ENCODE measurements at regions of chr12 and their contacts with region 1.

Region 1: DNA sequence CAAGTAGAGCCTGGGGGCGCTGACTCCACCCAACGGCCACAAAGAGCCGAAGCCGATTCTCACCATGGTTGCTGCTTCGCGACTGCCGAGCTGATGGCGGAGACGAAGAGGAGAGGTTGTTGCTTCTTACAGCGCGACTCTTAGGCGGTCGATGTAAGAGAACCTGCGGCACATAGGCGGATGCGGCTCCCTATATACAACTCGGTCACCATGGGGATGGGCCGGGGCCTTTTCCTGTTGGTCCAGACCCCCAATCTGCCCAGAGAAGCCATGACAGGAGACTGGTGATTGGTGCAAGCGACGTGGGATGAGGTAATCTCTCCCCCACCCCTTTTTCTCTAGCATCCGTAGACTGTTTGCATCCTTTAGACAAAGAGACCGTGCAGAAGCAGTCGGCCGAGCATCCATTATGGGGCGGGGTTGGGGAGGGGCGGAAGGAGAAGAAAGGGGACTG is at the start of gene TUBA1A:
- DNase-seq: peak; percentile 93 to 97 (median 95)
- ATAC-seq: peak; percentile 94 to 97
- H3K4me3 ChIP-seq: peak within 1 kb of the TSS; percentile 68
- H3K27ac ChIP-seq: peak within 1 kb of the TSS; percentile 73
- H3K4me1 ChIP-seq: no peaks in the 10 kb centered on the region
- H3K27me3 ChIP-seq: no peaks in the 10 kb centered on the region
- total RNA-seq, gene TUBA1A: 75.6 to 136 (median 112) TPM

Region 2: DNA sequence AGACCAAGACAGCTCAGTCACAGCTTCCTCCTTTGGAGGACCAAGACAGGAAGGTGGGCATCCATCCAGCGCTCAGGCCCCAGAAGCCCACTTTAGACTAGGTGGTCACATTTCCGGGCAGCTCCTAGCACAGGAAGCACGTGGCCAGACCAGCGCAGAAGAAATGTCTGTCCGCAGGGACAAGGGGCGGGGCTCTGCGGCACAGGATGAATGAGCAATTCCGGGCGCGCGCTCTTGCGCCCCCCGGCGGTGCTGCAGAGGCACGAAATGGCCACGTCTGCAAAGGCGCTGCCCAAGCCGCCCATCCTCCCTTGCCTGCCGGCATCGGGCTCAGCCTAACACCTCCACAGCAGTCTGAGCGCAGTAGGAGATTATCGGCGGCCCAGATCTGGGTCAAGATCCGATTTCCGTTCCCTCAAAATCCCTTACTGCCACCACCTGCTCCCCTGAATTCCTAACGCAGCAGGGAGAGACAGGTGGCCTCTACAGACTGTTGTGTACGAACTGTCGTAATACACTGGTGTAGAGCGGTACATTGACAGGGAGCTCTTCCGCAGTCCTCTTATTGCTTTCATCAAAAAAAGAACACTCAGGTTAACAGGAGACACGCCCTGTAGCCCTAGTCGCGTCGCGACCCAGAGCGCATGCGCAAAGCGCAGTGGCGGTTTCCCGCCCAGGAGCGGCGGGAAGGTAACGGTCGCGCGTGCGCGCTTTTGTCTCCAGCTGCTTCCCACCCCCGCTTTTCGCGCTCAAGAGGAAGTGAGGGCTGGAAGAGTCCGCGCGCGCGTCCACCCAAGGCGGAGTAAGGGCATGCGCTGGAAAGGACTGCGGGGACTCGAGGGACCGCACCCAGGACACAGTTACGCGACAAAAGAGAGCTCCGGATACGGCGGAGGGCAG is 58.5 kb before region 1 on chr12:
- intact Hi-C with region 1: loop called in 3 of 4 experiments (anchors 5 to 10 kb)
- DNase-seq: peak; percentile 96 to 98 (median 97)
- ATAC-seq: peak; percentile 89 to 90
- H3K4me3 ChIP-seq: peak overlapping the region; percentile 81
- H3K27ac ChIP-seq: peak overlapping the region; percentile 99
- H3K4me1 ChIP-seq: peaks cover 5% of the 10 kb centered on the region
- H3K27me3 ChIP-seq: no peaks in the 10 kb centered on the region

Region 3: GRCh38 chr12:49138587-49138986 is 50.4 kb before region 1 on chr12:
- intact Hi-C with region 1: loop called in 3 of 4 experiments (anchors 5 to 10 kb)
- DNase-seq: no peak
- ATAC-seq: no peak
- H3K4me3 ChIP-seq: no peak overlapping the region
- H3K27ac ChIP-seq: no peak overlapping the region
- H3K4me1 ChIP-seq: no peaks in the 10 kb centered on the region
- H3K27me3 ChIP-seq: no peaks in the 10 kb centered on the region

Measured in right cardiac atrium (tissue), 5 donors.